Right cardiac atrium (tissue), 5 donors: ENCODE measurements at regions of chr7 and their contacts with region 1.

Region 1: GRCh38 chr7:75559355-75559975 is 67.3 kb downstream of the SPDYE5 start:
- DNase-seq: no peak
- ATAC-seq: no peak
- H3K4me3 ChIP-seq: no peak overlapping the region
- H3K27ac ChIP-seq: no peak overlapping the region
- H3K4me1 ChIP-seq: no peaks in the 10 kb centered on the region
- H3K27me3 ChIP-seq: no peaks in the 10 kb centered on the region

Region 2: GRCh38 chr7:75617634-75618234 is 58.3 kb after region 1 on chr7:
- intact Hi-C with region 1: loop called in 1 of 4 experiments (anchors 10 kb)
- DNase-seq: peak; percentile 75 to 85 (median 80)
- ATAC-seq: peak; percentile 78 to 79
- H3K4me3 ChIP-seq: no peak overlapping the region
- H3K27ac ChIP-seq: peak overlapping the region; percentile 12
- H3K4me1 ChIP-seq: peaks cover 6% of the 10 kb centered on the region
- H3K27me3 ChIP-seq: no peaks in the 10 kb centered on the region

Region 3: GRCh38 chr7:75762314-75762917 is 203.0 kb after region 1 on chr7:
- intact Hi-C with region 1: no loop called
- DNase-seq: no peak
- ATAC-seq: peak; percentile 84 to 89
- H3K4me3 ChIP-seq: no peak overlapping the region
- H3K27ac ChIP-seq: no peak overlapping the region
- H3K4me1 ChIP-seq: no peaks in the 10 kb centered on the region
- H3K27me3 ChIP-seq: no peaks in the 10 kb centered on the region

Region 4: DNA sequence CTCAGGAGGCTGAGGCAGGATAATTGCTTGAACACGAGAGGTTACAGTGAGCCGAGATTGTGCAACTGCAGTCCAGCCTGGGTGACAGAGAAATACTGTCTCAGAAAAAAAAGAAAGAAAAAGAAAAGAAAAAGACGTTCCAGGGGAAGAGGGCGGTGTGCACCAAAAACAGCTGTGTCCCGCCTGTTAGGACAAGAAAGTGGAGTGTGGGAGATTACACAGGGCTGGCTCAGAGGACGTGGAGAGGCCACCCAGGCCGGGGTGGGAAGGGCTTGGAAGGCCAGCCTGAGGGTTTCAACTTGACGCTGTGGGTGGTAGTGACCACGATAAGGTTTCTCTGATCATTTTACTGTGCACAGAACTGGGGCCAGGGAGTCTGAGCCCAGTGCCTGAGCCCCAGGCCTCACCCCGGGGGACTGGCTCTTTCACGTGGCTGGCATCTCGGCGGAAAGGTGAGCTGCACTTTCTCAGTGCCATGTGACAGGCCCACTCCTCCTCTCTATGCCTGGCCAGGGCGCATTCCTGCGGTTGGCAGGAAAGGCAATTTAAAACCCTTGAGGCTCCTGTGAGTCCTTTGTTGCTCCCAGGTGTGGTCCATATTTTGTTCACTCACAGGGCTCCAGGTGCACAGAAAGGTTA is 333.3 kb after region 1 on chr7:
- intact Hi-C with region 1: no loop called
- DNase-seq: peak; percentile 76 to 86 (median 82)
- ATAC-seq: peak; percentile 69 to 72
- H3K4me3 ChIP-seq: no peak overlapping the region
- H3K27ac ChIP-seq: no peak overlapping the region
- H3K4me1 ChIP-seq: no peaks in the 10 kb centered on the region
- H3K27me3 ChIP-seq: no peaks in the 10 kb centered on the region